Dendritic cell treated with granulocyte-macrophage colony-stimulating factor and Interleukin-4, amounts not matched to agents 40 ng/mL and 50 ng/mL, for 4 days (primary cell): ENCODE measurements at regions of chr4 and their contacts with region 1.

Region 1: DNA sequence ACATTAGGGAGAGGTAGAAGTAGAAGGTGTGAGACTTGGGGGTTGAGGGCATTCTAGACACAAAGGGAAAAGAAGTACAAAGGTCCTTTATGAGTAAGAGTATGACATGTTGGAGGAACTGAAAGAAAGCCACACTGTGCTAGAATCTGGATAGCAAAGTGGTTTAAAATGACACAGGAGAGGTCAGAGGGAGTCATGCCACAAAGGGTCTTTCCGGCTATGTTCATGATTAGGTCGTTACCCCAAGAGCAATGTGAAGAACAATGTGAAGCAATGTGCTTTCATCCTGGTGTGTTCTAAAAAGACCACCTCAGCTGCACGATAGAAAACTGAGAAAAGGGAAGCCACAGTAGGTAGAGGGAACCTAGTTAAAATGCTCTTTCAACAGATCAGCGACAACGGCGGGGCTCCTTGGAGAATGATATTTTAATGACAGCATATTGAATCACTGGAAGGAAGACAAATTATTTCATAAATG is 29.2 kb downstream of the SMIM14 start:
- H3K4me3 Mint-ChIP-seq: peak overlapping the region; percentile 35
- H3K27ac Mint-ChIP-seq: peak overlapping the region; percentile 76
- H3K4me1 Mint-ChIP-seq: peaks cover 22% of the 10 kb centered on the region
- H3K27me3 Mint-ChIP-seq: no peaks in the 10 kb centered on the region

Region 2: GRCh38 chr4:39621582-39621981 is 12.1 kb after region 1 on chr4:
- intact Hi-C with region 1: loop called (anchors 1 kb)
- H3K4me3 Mint-ChIP-seq: no peak overlapping the region
- H3K27ac Mint-ChIP-seq: no peak overlapping the region
- H3K4me1 Mint-ChIP-seq: peaks cover 25% of the 10 kb centered on the region
- H3K27me3 Mint-ChIP-seq: no peaks in the 10 kb centered on the region

Region 3: GRCh38 chr4:39846120-39846519 is 236.6 kb after region 1 on chr4:
- intact Hi-C with region 1: no loop called
- H3K4me3 Mint-ChIP-seq: no peak overlapping the region
- H3K27ac Mint-ChIP-seq: no peak overlapping the region
- H3K4me1 Mint-ChIP-seq: no peaks in the 10 kb centered on the region
- H3K27me3 Mint-ChIP-seq: no peaks in the 10 kb centered on the region